Activated naive CD4-positive, alpha-beta T cell treated with anti-CD3 and anti-CD28 coated beads, Interleukin-2, amount 10 ng/mL, durations not matched to agents 7 days and 5 days (primary cell): ENCODE measurements at regions of chr1 and their contacts with region 1.

Region 1: DNA sequence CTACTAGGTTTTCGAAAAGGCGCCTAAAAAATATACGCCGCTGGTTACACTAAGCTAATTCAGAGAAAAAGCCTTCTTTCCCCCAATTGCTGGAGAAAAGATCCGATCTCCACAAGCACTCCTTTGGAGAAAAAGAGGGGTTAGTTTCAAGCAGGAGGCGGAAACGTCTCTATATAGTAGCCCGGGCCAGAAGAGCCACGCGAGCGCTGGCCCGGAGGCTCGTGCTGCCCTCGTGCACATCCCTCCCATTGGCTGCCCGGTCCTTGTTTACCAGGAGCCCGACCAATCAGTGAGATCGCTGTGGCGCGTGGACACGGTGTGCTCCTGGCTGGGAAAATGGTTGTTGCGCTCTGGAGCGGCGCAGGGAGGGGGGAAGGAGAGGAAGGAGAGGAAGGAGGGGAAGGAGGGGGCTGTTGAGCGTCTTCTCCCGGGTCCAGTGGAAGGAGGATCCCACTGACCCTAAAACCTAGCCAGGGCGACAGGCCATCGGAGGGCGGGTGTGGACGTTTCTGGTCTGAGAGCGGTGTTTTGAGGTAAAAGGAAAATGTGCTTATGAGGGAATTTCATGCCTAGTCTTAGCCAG is at the start of gene TXNIP:
- DNase-seq: peak; percentile 98
- H3K4me3 Mint-ChIP-seq: peak within 1 kb of the TSS; percentile 97
- H3K27ac Mint-ChIP-seq: peak within 1 kb of the TSS; percentile 99
- H3K4me1 Mint-ChIP-seq: peaks cover 60% of the 10 kb centered on the region
- H3K27me3 Mint-ChIP-seq: no peaks in the 10 kb centered on the region

Region 2: DNA sequence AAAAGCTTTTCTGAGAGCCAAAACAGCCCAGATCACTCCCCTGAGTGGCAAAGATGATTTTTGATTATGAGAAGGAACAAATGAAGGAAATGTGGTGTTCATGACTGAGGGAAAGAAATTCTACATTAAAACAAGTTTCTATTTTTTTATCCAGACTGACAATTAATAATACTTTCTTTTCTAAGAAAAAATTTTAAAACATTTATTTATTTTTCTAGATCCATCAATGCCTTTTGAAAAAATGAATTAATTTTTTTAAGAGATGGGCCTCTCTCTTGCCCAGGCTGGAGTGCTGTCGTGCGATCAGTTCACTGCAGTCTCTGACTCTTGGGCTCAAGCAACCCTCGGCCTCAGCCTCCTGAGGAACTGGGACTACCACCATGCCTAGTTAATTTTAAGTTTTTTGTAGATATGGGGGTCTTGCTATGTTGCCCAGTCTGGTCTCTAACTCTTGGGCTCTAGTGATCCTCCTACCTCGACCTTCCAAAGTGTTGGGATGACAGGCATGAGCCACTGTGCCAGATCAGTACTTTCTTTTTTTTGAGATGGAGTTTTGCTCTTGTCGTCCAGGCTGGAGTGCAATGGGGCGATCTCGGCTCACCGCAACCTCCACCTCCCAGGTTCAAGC is 11.1 kb after region 1 on chr1:
- CTCF ChIA-PET with region 1: interaction called, 37 read pairs
- DNase-seq: no peak
- H3K4me3 Mint-ChIP-seq: no peak overlapping the region
- H3K27ac Mint-ChIP-seq: peak overlapping the region; percentile 91
- H3K4me1 Mint-ChIP-seq: peaks cover 53% of the 10 kb centered on the region
- H3K27me3 Mint-ChIP-seq: no peaks in the 10 kb centered on the region